ENCODE measurements at regions of chr17 and their contacts with region 1.

Region 1: DNA sequence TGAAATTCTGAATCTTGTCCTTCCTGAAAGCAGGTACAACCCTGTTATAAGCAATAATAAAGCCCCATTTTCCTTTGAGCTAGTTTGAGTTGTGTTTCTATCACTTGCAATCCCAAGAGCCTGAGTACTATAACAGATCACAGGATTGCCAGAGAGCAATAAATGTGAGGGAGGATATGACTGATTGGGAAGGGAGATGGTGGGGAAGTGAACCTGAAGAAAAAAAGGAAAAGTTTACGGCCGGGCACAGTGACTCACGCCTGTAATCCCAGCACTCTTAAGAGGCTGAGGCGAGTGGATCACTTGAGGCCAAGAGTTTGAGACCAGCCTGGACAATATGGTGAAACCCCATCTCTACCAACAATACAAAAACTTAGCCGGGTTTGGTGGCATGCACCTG is 80.4 kb downstream of the COX10 start:
- DNase-seq: no peak
- H3K4me3 ChIP-seq: no peak overlapping the region
- H3K27ac ChIP-seq: no peak overlapping the region
- H3K4me1 ChIP-seq: no peaks in the 10 kb centered on the region
- H3K27me3 ChIP-seq: no peaks in the 10 kb centered on the region
- CTCF ChIP-seq: no peak
- POLR2A ChIP-seq: no peak

Region 2: GRCh38 chr17:14196377-14196997 is 46.7 kb after region 1 on chr17:
- intact Hi-C with region 1: no loop called
- DNase-seq: no peak
- H3K4me3 ChIP-seq: no peak overlapping the region
- H3K27ac ChIP-seq: no peak overlapping the region
- H3K4me1 ChIP-seq: no peaks in the 10 kb centered on the region
- H3K27me3 ChIP-seq: no peaks in the 10 kb centered on the region
- CTCF ChIP-seq: no peak
- POLR2A ChIP-seq: no peak

Region 3: GRCh38 chr17:14514983-14515382 is 365.2 kb after region 1 on chr17:
- intact Hi-C with region 1: loop called (anchors 5 kb)
- DNase-seq: no peak
- H3K4me3 ChIP-seq: no peak overlapping the region
- H3K27ac ChIP-seq: no peak overlapping the region
- H3K4me1 ChIP-seq: no peaks in the 10 kb centered on the region
- H3K27me3 ChIP-seq: no peaks in the 10 kb centered on the region
- CTCF ChIP-seq: no peak
- POLR2A ChIP-seq: no peak

Measured in breast epithelium (tissue), 4 donors.